ENCODE measurements at regions of chr5 and their contacts with region 1.

Region 1: DNA sequence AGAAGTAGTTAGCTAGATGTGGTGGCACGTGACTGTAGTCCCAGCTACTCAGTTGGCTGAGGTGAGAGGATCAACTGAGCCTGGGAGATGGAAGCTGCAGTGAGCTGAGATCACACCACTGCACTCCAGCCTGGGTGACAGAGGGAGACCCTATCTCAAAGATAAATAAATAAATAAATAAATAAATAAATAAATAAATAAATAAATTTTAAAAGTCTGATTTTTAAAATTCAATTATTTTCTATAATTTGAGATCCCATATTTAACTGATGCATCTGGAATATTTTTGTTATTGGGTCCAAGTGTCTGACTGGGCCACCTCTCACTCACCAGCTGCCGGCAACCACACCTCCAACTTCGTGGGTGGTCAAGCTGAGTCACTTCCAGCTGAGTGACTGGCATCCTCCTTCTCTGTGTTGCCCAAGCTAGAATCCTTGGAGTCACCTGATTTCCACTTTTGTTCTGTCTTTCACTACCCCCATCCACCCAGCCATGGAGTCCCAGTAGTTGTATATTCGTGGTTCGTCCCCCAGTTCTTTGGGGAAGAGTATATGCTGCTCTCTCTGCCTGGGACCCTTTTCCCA is 70.9 kb downstream of the EGFLAM start:
- DNase-seq: peak; percentile 72
- H3K27ac ChIP-seq: no peak overlapping the region
- CTCF ChIP-seq: no peak

Region 2: DNA sequence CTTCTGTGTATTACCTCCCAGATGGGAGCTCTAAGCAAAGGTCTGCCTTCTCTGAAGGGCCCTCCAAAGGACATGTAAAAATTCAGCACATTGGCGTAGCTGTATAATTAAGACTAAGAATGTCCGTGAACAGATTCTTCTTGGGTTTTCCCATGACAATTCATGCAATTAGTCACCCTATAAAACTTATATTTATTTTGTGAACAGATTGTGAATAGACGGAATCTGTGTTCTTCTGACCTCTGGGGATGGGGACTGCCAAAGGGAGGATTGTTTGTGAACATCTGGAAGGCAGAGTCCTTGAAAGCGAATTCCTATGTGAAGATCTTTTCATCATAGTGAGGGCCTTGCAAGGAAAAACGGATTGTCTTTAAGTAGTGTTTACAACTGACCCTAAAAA is 40.5 kb after region 1 on chr5:
- CTCF ChIA-PET with region 1: no interaction called
- POLR2A ChIA-PET with region 1: interaction called, 13 read pairs
- DNase-seq: no peak
- H3K27ac ChIP-seq: no peak overlapping the region
- CTCF ChIP-seq: no peak